IMR-90 (cell line): ENCODE measurements at regions of chr16 and their contacts with region 1.

Region 1: DNA sequence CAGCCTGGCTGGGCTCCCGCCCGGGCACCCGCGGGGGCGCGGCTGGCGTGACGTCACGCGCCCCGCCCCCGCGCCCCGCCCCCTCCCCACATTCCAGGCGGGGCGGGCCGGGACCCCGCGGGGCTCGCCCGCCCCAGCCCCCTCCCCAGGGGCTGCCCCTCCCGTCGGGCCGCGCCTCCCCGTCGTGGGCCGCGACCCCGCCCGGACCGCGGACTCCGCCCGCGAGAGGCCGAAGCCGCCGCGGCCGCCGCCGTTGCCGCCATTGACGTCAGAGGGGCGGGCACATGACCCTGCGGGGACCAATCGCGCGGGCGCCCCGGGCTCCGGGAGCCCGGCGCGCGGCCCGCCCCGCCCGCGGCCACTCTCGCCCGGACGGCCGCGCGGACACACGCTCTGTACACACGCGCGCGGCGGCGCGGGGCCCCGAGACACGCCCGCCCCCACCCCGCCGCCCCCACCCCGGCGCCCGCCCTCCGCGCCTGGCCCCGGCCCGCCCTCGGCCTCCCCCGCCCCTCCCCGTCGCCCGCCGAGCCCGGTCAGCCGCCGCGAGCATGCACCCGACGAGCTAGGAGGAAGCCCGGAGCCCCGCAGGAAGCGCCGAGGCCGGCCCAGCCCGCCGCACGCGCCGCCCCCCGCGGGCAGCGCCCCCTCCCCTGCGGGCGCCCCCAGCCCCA is at the start of gene CMIP:
- DNase-seq: peak; percentile 72
- ATAC-seq: peak; percentile 91
- H3K4me3 ChIP-seq: peak within 1 kb of the TSS; percentile 95
- H3K27ac ChIP-seq: peak within 1 kb of the TSS; percentile 80
- H3K4me1 ChIP-seq: peaks cover 7% of the 10 kb centered on the region
- H3K27me3 ChIP-seq: peaks cover 34% of the 10 kb centered on the region
- CTCF ChIP-seq: no peak
- POLR2A ChIP-seq: no peak; the same call in 1 of the 2 replicates
- RAD21 ChIP-seq: no peak
- total RNA-seq, gene CMIP: 3.2 and 3.9 TPM in 2 replicates

Region 2: DNA sequence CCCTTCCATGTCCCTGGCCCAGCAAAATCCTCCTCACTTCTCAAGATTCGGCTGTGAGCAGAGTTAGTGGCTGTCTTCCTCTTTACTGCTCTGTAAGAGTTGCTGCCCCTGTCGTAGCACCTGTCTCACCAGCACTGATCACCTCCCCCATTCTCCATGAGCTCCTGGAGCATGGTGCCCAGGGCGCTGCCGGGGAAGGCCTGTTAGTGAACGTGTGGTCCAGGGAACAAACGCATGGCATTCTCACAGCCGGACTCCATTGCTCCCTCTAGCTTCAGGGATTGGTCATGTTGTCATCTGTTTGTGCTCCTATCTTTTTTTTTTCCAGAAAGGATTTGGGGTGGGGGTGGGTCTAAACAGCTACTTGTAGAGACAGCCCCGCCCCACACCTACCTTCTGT is 141.2 kb after region 1 on chr16:
- CTCF ChIA-PET with region 1: interaction called, 3 read pairs
- POLR2A ChIA-PET with region 1: no interaction called
- dilution Hi-C with region 1: no loop called
- in situ Hi-C with region 1: no loop called
- intact Hi-C with region 1: loop called (anchors 10 kb)
- DNase-seq: no peak
- ATAC-seq: no peak
- H3K4me3 ChIP-seq: no peak overlapping the region
- H3K27ac ChIP-seq: no peak overlapping the region
- H3K4me1 ChIP-seq: peaks cover 13% of the 10 kb centered on the region
- H3K27me3 ChIP-seq: no peaks in the 10 kb centered on the region
- CTCF ChIP-seq: 0 out of 2 replicates have a peak, but pooled peaks have one; percentile 20
- POLR2A ChIP-seq: no peak
- RAD21 ChIP-seq: no peak

Region 3: GRCh38 chr16:81610144-81610842 is 165.7 kb after region 1 on chr16:
- CTCF ChIA-PET with region 1: no interaction called
- POLR2A ChIA-PET with region 1: no interaction called
- dilution Hi-C with region 1: no loop called
- in situ Hi-C with region 1: no loop called
- intact Hi-C with region 1: loop called (anchors 5 kb)
- DNase-seq: peak; percentile 84
- ATAC-seq: peak; percentile 93
- H3K4me3 ChIP-seq: no peak overlapping the region
- H3K27ac ChIP-seq: no peak overlapping the region
- H3K4me1 ChIP-seq: peaks cover 11% of the 10 kb centered on the region
- H3K27me3 ChIP-seq: no peaks in the 10 kb centered on the region
- CTCF ChIP-seq: no peak
- POLR2A ChIP-seq: no peak
- RAD21 ChIP-seq: peak; percentile 20; the same call in 1 of the 2 replicates